HCT116 (cell line): ENCODE measurements at regions of chr12 and their contacts with region 1.

Region 1: GRCh38 chr12:93979189-93979588 is 169.2 kb upstream of the PLXNC1 start:
- DNase-seq: peak; percentile 28
- ATAC-seq: peak; percentile 65
- H3K4me3 ChIP-seq: no peak overlapping the region
- H3K27ac ChIP-seq: no peak overlapping the region
- H3K4me1 ChIP-seq: no peaks in the 10 kb centered on the region
- H3K27me3 ChIP-seq: no peaks in the 10 kb centered on the region
- CTCF ChIP-seq: peak; percentile 47 to 68 (median 61)
- POLR2A ChIP-seq: no peak
- RAD21 ChIP-seq: peak; percentile 88

Region 2: GRCh38 chr12:93526786-93527428 is 452.3 kb before region 1 on chr12:
- CTCF ChIA-PET with region 1: no interaction called
- POLR2A ChIA-PET with region 1: no interaction called
- RAD21 ChIA-PET with region 1: no interaction called
- intact Hi-C with region 1: loop called (anchors 5 kb)
- DNase-seq: peak; percentile 61
- ATAC-seq: peak; percentile 80
- H3K4me3 ChIP-seq: no peak overlapping the region
- H3K27ac ChIP-seq: no peak overlapping the region
- H3K4me1 ChIP-seq: peaks cover 9 to 14% of the 10 kb centered on the region in 2 experiments
- H3K27me3 ChIP-seq: no peaks in the 10 kb centered on the region
- CTCF ChIP-seq: no peak
- POLR2A ChIP-seq: no peak
- RAD21 ChIP-seq: no peak

Region 3: DNA sequence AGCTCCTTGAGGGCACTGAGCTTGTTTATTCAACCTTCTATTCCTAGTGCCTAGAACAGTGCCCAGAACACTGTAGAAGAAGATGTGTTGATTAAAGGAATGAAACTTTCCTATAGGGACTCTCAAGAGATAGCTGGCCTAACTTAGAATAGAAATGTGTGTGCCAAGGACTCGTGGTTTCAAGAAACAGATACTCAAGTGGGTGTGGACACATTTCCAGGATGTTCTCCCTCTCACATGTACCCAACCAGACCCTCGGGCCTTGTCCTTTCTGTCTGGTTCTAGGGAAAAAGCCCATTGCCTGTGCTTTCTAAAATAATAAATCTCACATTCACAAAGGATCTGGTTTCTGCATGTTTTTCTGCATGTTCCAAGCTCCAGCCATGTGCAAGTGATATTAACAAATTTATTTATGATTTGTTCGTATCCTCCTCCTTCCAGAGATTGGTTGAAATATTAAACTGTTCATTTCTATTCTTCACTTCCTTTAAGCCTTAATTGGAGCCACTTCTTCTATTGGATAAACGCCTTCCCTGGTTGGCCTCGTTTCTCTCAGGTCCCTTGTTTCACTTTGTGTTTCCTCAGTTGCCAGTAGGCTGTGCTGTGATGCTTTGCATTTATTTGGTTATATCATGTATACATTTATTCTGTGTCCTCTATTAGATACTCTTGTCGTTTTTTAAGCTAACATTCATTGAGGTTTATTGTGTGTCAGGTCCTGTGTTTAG is 212.2 kb before region 1 on chr12:
- CTCF ChIA-PET with region 1: interaction called, 3 read pairs
- POLR2A ChIA-PET with region 1: no interaction called
- RAD21 ChIA-PET with region 1: no interaction called
- intact Hi-C with region 1: loop called (anchors 2 kb)
- DNase-seq: no peak
- ATAC-seq: peak; percentile 71
- H3K4me3 ChIP-seq: no peak overlapping the region
- H3K27ac ChIP-seq: no peak overlapping the region
- H3K4me1 ChIP-seq: peaks cover 0 to 8% of the 10 kb centered on the region in 2 experiments; a peak in 1 of 4 replicates
- H3K27me3 ChIP-seq: no peaks in the 10 kb centered on the region
- CTCF ChIP-seq: peak; percentile 42 to 63 (median 53); a peak in 5 of 6 replicates
- POLR2A ChIP-seq: no peak
- RAD21 ChIP-seq: peak; percentile 78